ENCODE measurements at regions of chr16 and their contacts with region 1.

Region 1: DNA sequence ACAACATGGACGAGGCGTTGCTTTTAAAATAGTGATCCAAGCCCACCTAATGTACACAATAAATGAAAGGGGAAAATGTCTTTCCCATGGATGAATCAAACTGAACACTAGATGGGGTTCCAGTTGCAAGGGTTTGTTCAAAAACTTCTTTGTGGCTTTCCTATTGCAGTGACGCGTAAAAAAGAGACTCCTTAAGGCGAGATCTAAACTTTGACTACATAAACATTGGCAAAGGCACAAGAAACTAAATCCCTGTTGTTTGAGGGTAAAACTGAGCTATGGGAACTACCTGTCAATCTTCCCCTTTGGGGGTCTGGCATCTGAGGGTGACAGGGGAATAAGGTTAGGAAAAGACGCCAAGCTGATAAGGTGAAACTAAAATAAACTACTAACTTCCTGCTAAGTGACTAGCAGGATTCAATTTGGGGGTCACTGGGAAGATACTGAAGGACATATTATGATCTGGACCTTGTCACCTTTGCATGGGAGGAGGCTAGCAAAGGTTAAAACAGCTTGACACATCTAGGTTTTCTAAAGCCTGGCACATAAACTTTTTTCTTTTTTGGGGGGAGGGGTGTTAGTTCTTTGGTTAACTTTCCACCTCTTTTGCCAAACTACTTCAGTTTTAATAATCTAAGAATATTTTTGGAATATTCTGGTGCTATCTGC is 4.7 kb downstream of the SALL1 start:
- DNase-seq: peak; percentile 76
- H3K4me3 ChIP-seq: peak overlapping the region; percentile 21
- H3K27ac ChIP-seq: peak overlapping the region; percentile 50
- H3K4me1 ChIP-seq: peaks cover 40% of the 10 kb centered on the region
- H3K27me3 ChIP-seq: peaks cover 19% of the 10 kb centered on the region
- CTCF ChIP-seq: peak; percentile 61

Region 2: GRCh38 chr16:51556694-51557340 is 410.4 kb after region 1 on chr16:
- CTCF ChIA-PET with region 1: no interaction called
- POLR2A ChIA-PET with region 1: no interaction called
- intact Hi-C with region 1: loop called (anchors 10 kb)
- DNase-seq: peak; percentile 91
- H3K4me3 ChIP-seq: no peak overlapping the region
- H3K27ac ChIP-seq: peak overlapping the region; percentile 62
- H3K4me1 ChIP-seq: peaks cover 17% of the 10 kb centered on the region
- H3K27me3 ChIP-seq: no peaks in the 10 kb centered on the region
- CTCF ChIP-seq: 0 out of 2 replicates have a peak, but pooled peaks have one; percentile 17

Region 3: GRCh38 chr16:51762081-51762996 is 615.9 kb after region 1 on chr16:
- CTCF ChIA-PET with region 1: no interaction called
- POLR2A ChIA-PET with region 1: no interaction called
- intact Hi-C with region 1: loop called (anchors 1 kb)
- DNase-seq: peak; percentile 92
- H3K4me3 ChIP-seq: peak overlapping the region; percentile 13
- H3K27ac ChIP-seq: peak overlapping the region; percentile 34
- H3K4me1 ChIP-seq: peaks cover 55% of the 10 kb centered on the region
- H3K27me3 ChIP-seq: no peaks in the 10 kb centered on the region
- CTCF ChIP-seq: peak; percentile 98

Measured in A673 (cell line).